ENCODE measurements at regions of chr3 and their contacts with region 1.

Region 1: GRCh38 chr3:15064835-15065549 is at the start of gene MRPS25:
- DNase-seq: peak; percentile 93
- H3K4me3 Mint-ChIP-seq: peak within 1 kb of the TSS; percentile 96
- H3K27ac Mint-ChIP-seq: peak within 1 kb of the TSS; percentile 87
- H3K4me1 Mint-ChIP-seq: peaks cover 25% of the 10 kb centered on the region
- H3K27me3 Mint-ChIP-seq: no peaks in the 10 kb centered on the region
- total RNA-seq, gene MRPS25: 55.0 to 57.5 TPM

Region 2: GRCh38 chr3:15051531-15051930 is 13.5 kb before region 1 on chr3:
- CTCF ChIA-PET with region 1: interaction called, 13 read pairs
- intact Hi-C with region 1: loop called (anchors 1 kb)
- DNase-seq: peak; percentile 64
- H3K4me3 Mint-ChIP-seq: no peak overlapping the region
- H3K27ac Mint-ChIP-seq: peak overlapping the region; percentile 65
- H3K4me1 Mint-ChIP-seq: peaks cover 36% of the 10 kb centered on the region
- H3K27me3 Mint-ChIP-seq: no peaks in the 10 kb centered on the region

Region 3: GRCh38 chr3:15098503-15099363 is 33.7 kb after region 1 on chr3 and contains the start of gene RBSN:
- CTCF ChIA-PET with region 1: no interaction called
- intact Hi-C with region 1: loop called (anchors 1 kb)
- DNase-seq: peak; percentile 97
- H3K4me3 Mint-ChIP-seq: peak within 1 kb of the TSS; percentile 90
- H3K27ac Mint-ChIP-seq: peak within 1 kb of the TSS; percentile 83
- H3K4me1 Mint-ChIP-seq: peaks cover 10% of the 10 kb centered on the region
- H3K27me3 Mint-ChIP-seq: no peaks in the 10 kb centered on the region
- total RNA-seq, gene RBSN: 15.3 to 15.8 TPM

Region 4: GRCh38 chr3:15121936-15122335 is 56.9 kb after region 1 on chr3:
- CTCF ChIA-PET with region 1: no interaction called
- intact Hi-C with region 1: no loop called
- DNase-seq: no peak
- H3K4me3 Mint-ChIP-seq: no peak overlapping the region
- H3K27ac Mint-ChIP-seq: no peak overlapping the region
- H3K4me1 Mint-ChIP-seq: peaks cover 5% of the 10 kb centered on the region
- H3K27me3 Mint-ChIP-seq: peaks cover 6% of the 10 kb centered on the region

Region 5: GRCh38 chr3:15377961-15378791 is 313.2 kb after region 1 on chr3:
- CTCF ChIA-PET with region 1: no interaction called
- intact Hi-C with region 1: no loop called
- DNase-seq: peak; percentile 97
- H3K4me3 Mint-ChIP-seq: no peak overlapping the region
- H3K27ac Mint-ChIP-seq: peak overlapping the region; percentile 24
- H3K4me1 Mint-ChIP-seq: peaks cover 5% of the 10 kb centered on the region
- H3K27me3 Mint-ChIP-seq: no peaks in the 10 kb centered on the region